ENCODE measurements at regions of chr1 and their contacts with region 1.

Region 1: DNA sequence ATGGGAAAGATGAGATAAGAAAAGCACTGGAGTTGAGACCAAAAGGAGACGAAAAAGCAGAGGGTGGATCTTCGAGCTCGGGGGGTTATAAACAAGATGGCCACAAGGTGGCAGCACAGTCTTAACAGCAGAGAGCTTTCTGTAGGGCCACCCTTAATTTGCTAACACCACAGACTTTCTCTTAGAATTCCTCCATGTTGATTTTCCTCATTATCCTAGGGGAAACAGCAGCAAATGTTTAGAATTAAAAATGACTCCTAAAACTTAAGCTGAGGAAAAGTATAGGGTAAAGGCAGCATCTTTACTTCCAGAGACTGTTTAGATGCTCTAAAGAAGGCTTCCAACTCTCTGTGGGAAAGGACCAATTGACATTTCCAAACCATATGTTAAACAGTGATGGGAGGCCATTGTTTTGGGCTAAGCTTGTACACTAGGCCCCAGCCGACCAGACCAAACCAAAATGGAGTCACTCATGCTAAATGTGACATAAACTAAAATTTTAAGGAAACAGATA is 2.5 kb upstream of the APOBEC4 start:
- DNase-seq: peak; percentile 55 to 68 (median 64)
- H3K4me3 ChIP-seq: no peak overlapping the region
- H3K4me3 Mint-ChIP-seq: peak overlapping the region in 1 of 8 donors; percentile 62
- H3K27ac ChIP-seq: no peak overlapping the region
- H3K27ac Mint-ChIP-seq: peak overlapping the region in 1 of 7 donors; percentile 44
- H3K4me1 ChIP-seq: peaks cover 31% of the 10 kb centered on the region
- H3K4me1 Mint-ChIP-seq: peaks cover 29 to 41% (median 32%) of the 10 kb centered on the region in 4 donors
- H3K27me3 ChIP-seq: no peaks in the 10 kb centered on the region
- H3K27me3 Mint-ChIP-seq: peaks cover 2% of the 10 kb centered on the region in 2 donors

Region 2: GRCh38 chr1:183267646-183268431 is 387.8 kb before region 1 on chr1:
- CTCF ChIA-PET with region 1: no interaction called
- POLR2A ChIA-PET with region 1: no interaction called
- intact Hi-C with region 1: no loop called
- DNase-seq: no peak
- H3K4me3 ChIP-seq: no peak overlapping the region
- H3K4me3 Mint-ChIP-seq: no peak overlapping the region
- H3K27ac ChIP-seq: no peak overlapping the region
- H3K27ac Mint-ChIP-seq: no peak overlapping the region
- H3K4me1 ChIP-seq: no peaks in the 10 kb centered on the region
- H3K4me1 Mint-ChIP-seq: no peaks in the 10 kb centered on the region
- H3K27me3 ChIP-seq: peaks cover 3% of the 10 kb centered on the region
- H3K27me3 Mint-ChIP-seq: peaks cover 7 to 17% of the 10 kb centered on the region in 2 donors

Region 3: DNA sequence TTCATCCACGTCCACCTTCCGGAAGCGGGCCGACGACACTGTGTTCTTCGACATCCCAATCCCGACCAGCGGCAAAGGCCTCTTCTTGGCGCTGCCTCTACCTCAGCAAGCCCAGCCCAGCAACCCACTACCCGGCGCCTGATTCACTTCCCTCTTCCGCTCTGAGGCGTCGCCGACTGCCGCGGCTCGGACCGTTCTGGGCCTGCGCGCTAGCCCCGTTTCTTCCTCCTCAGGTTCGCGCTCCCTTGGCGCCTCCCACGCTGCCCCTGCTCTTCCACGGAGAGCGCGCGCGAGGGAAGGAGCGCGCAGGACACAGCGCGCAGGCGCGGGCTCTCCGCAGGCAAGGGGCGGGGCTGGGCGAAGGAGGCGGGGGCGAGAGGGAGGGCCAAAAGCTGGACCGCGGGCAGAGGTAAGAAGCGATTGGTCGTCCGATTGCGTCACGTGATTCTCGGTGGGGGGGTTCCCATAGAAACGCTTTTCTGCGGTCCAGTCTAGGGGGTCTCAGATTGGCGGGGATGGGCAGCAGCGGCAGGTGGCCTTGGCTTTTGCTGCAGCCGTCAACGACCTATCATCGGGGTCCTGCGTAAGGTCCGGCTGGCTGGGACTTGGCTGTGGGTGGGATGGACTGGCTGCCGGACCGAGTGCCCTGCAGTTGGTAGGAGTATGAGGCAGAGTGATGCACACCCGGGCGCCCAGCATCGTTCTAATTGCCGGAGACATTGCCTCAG is 19.8 kb before region 1 on chr1 and contains the start of gene ARPC5:
- CTCF ChIA-PET with region 1: interaction called, 43 read pairs
- POLR2A ChIA-PET with region 1: interaction called, 3 read pairs
- intact Hi-C with region 1: loop called (anchors 2 kb)
- DNase-seq: peak; percentile 94 to 95 (median 94)
- H3K4me3 ChIP-seq: peak within 1 kb of the TSS; percentile 72 to 88
- H3K4me3 Mint-ChIP-seq: peak within 1 kb of the TSS; percentile 100
- H3K27ac ChIP-seq: peak within 1 kb of the TSS; percentile 81
- H3K27ac Mint-ChIP-seq: peak within 1 kb of the TSS; percentile 92 to 100 (median 99)
- H3K4me1 ChIP-seq: peaks cover 44% of the 10 kb centered on the region
- H3K4me1 Mint-ChIP-seq: peaks cover 26 to 54% (median 36%) of the 10 kb centered on the region in 4 donors
- H3K27me3 ChIP-seq: no peaks in the 10 kb centered on the region
- H3K27me3 Mint-ChIP-seq: no peaks in the 10 kb centered on the region
- total RNA-seq, gene ARPC5: 106 to 107 TPM

Region 4: GRCh38 chr1:183670178-183670577 is 14.6 kb after region 1 on chr1:
- CTCF ChIA-PET with region 1: interaction called, 34 read pairs
- POLR2A ChIA-PET with region 1: no interaction called
- intact Hi-C with region 1: no loop called
- DNase-seq: no peak
- H3K4me3 ChIP-seq: no peak overlapping the region
- H3K4me3 Mint-ChIP-seq: no peak overlapping the region
- H3K27ac ChIP-seq: no peak overlapping the region
- H3K27ac Mint-ChIP-seq: no peak overlapping the region
- H3K4me1 ChIP-seq: no peaks in the 10 kb centered on the region
- H3K4me1 Mint-ChIP-seq: no peaks in the 10 kb centered on the region
- H3K27me3 ChIP-seq: no peaks in the 10 kb centered on the region
- H3K27me3 Mint-ChIP-seq: peaks cover 5 to 6% of the 10 kb centered on the region in 2 donors

Region 5: GRCh38 chr1:183685112-183685713 is 29.6 kb after region 1 on chr1:
- CTCF ChIA-PET with region 1: interaction called, 64 read pairs
- POLR2A ChIA-PET with region 1: interaction called, 3 read pairs
- intact Hi-C with region 1: loop called (anchors 1 kb)
- DNase-seq: peak in 4 of 5 donors; percentile 51 to 57 (median 56)
- H3K4me3 ChIP-seq: no peak overlapping the region
- H3K4me3 Mint-ChIP-seq: no peak overlapping the region
- H3K27ac ChIP-seq: no peak overlapping the region
- H3K27ac Mint-ChIP-seq: no peak overlapping the region
- H3K4me1 ChIP-seq: no peaks in the 10 kb centered on the region
- H3K4me1 Mint-ChIP-seq: no peaks in the 10 kb centered on the region
- H3K27me3 ChIP-seq: no peaks in the 10 kb centered on the region
- H3K27me3 Mint-ChIP-seq: peaks cover 4 to 12% of the 10 kb centered on the region in 2 donors

Region 6: GRCh38 chr1:183891158-183891856 is 235.7 kb after region 1 on chr1:
- CTCF ChIA-PET with region 1: interaction called, 12 read pairs
- POLR2A ChIA-PET with region 1: no interaction called
- intact Hi-C with region 1: no loop called
- DNase-seq: no peak
- H3K4me3 ChIP-seq: no peak overlapping the region
- H3K4me3 Mint-ChIP-seq: no peak overlapping the region
- H3K27ac ChIP-seq: no peak overlapping the region
- H3K27ac Mint-ChIP-seq: no peak overlapping the region
- H3K4me1 ChIP-seq: peaks cover 34% of the 10 kb centered on the region
- H3K4me1 Mint-ChIP-seq: peaks cover 34 to 42% (median 38%) of the 10 kb centered on the region in 4 donors
- H3K27me3 ChIP-seq: no peaks in the 10 kb centered on the region
- H3K27me3 Mint-ChIP-seq: no peaks in the 10 kb centered on the region

Region 7: DNA sequence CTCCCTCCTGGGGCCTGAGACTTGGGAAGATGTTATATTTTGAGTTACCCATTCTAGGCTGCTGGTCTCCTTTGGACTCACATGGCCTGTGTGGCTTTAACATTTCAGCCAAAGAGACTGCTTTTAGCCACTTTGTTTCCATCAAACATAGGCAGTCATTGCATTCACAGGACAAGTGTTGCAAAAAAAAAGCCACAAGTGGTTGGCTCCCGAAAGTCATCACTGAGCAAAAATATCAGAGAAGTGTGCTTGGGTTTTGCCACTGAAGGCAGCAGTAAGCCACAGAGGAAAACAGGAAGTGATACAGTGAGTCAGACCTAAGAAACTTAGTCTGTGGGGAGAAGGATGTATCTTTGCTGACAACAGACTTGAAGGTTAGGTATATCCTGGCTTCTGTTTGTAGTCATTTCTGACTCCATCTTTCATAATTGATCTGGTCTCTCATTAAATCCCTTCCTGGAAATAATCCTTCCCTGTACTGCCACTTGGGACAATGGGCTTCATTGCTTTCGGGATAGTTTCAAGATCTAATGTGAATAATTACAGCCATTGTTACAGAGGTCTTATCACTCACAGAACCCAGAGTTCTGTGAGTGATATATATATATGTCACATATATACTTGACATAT is 301.1 kb after region 1 on chr1:
- CTCF ChIA-PET with region 1: interaction called, 10 read pairs
- POLR2A ChIA-PET with region 1: no interaction called
- intact Hi-C with region 1: no loop called
- DNase-seq: peak; percentile 72 to 78 (median 76)
- H3K4me3 ChIP-seq: no peak overlapping the region
- H3K4me3 Mint-ChIP-seq: peak overlapping the region in 7 of 8 donors; percentile 25 to 75 (median 67)
- H3K27ac ChIP-seq: peak overlapping the region; percentile 53
- H3K27ac Mint-ChIP-seq: no peak overlapping the region
- H3K4me1 ChIP-seq: peaks cover 37% of the 10 kb centered on the region
- H3K4me1 Mint-ChIP-seq: peaks cover 6 to 15% (median 7%) of the 10 kb centered on the region in 4 donors
- H3K27me3 ChIP-seq: no peaks in the 10 kb centered on the region
- H3K27me3 Mint-ChIP-seq: no peaks in the 10 kb centered on the region

Region 8: GRCh38 chr1:184051485-184052193 is 396.0 kb after region 1 on chr1 and contains the start of gene TSEN15:
- CTCF ChIA-PET with region 1: interaction called, 10 read pairs
- POLR2A ChIA-PET with region 1: no interaction called
- intact Hi-C with region 1: no loop called
- DNase-seq: peak; percentile 66 to 74 (median 72)
- H3K4me3 ChIP-seq: peak within 1 kb of the TSS; percentile 88 to 95
- H3K4me3 Mint-ChIP-seq: peak within 1 kb of the TSS; percentile 98 to 99 (median 99)
- H3K27ac ChIP-seq: peak within 1 kb of the TSS; percentile 67
- H3K27ac Mint-ChIP-seq: peak within 1 kb of the TSS; percentile 89 to 98 (median 96)
- H3K4me1 ChIP-seq: peaks cover 33% of the 10 kb centered on the region
- H3K4me1 Mint-ChIP-seq: peaks cover 26 to 47% (median 37%) of the 10 kb centered on the region in 4 donors
- H3K27me3 ChIP-seq: no peaks in the 10 kb centered on the region
- H3K27me3 Mint-ChIP-seq: peaks cover 0 to 5% of the 10 kb centered on the region in 2 donors
- total RNA-seq, gene TSEN15: 34.0 to 42.2 TPM